Caco-2 (cell line): ENCODE measurements at regions of chr13 and their contacts with region 1.

Region 1: GRCh38 chr13:45332036-45332830 is 8.8 kb downstream of the TPT1 start:
- DNase-seq: no peak
- H3K4me3 ChIP-seq: no peak overlapping the region
- H3K4me3 Mint-ChIP-seq: no peak overlapping the region
- H3K27ac Mint-ChIP-seq: peak overlapping the region; percentile 54
- H3K4me1 ChIP-seq: peaks cover 43% of the 10 kb centered on the region
- H3K4me1 Mint-ChIP-seq: peaks cover 51% of the 10 kb centered on the region
- H3K27me3 ChIP-seq: no peaks in the 10 kb centered on the region
- H3K27me3 Mint-ChIP-seq: no peaks in the 10 kb centered on the region
- CTCF ChIP-seq: no peak

Region 2: DNA sequence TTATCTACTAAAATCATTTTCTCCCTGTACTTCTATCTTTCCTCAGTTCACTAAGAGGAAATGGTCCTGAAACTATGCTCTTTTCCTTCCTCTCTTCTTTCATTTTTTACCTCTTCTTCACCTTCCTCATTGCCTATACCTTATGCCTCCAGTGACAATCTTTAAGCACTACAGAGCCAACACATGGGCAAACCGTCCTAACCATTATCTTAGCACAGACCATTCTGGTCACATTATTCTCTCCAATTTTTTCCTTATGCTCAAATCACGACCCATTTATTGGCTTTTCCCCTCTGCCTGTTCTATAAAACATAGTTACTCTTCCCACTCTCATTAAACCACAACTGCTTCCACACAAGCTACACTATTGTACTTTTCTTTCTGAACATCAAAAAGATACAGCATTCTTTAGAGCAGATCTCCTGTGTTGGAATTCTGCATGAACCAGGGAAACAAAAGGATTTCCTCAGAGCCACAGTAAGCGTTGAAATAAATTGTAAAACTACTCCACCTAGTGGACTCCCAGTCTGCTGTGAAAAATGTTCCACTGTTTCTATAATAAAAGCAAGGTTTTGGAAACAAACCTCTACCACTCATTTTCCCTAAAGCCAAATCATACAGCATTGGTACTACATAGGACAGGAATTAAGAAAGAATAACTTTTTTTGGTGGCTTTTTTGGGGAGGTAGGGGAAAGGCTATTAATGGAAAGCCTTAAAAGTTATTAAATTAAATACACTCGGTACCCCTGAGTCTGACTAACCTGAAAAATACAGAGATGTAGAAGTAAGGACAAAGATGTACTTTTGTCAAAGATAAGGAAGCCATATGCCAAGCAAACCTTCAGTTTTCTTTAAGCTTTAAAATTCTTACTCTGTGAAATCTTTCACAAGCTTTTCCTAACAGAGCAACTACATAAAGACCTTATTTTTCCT is 362.4 kb before region 1 on chr13:
- CTCF ChIA-PET with region 1: no interaction called
- POLR2A ChIA-PET with region 1: no interaction called
- intact Hi-C with region 1: no loop called
- DNase-seq: peak in 1 of 2 experiments; percentile 62
- H3K4me3 ChIP-seq: no peak overlapping the region
- H3K4me3 Mint-ChIP-seq: no peak overlapping the region
- H3K27ac Mint-ChIP-seq: no peak overlapping the region
- H3K4me1 ChIP-seq: peaks cover 14% of the 10 kb centered on the region
- H3K4me1 Mint-ChIP-seq: peaks cover 14% of the 10 kb centered on the region
- H3K27me3 ChIP-seq: no peaks in the 10 kb centered on the region
- H3K27me3 Mint-ChIP-seq: no peaks in the 10 kb centered on the region
- CTCF ChIP-seq: peak; percentile 74 to 81

Region 3: DNA sequence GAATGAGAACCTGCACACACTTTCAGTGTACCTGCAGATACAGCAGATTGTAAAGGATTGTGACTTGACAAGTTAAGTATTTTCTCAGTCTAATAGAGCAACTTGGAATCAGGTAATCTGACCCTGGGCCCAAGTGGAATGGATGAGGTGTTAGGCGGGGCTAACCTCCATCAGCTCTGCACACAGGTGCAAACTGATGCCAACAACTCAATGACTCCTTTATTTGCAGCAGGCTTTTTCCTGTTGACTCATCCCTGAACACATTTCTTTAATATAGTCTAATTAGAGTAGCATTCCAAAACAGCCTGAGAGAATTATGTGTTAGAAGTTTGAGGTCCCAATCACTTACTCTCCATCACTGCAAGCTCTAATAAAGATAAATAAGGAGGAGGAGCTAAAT is 40.1 kb before region 1 on chr13:
- CTCF ChIA-PET with region 1: no interaction called
- POLR2A ChIA-PET with region 1: interaction called, 16 read pairs
- intact Hi-C with region 1: no loop called
- DNase-seq: no peak
- H3K4me3 ChIP-seq: no peak overlapping the region
- H3K4me3 Mint-ChIP-seq: no peak overlapping the region
- H3K27ac Mint-ChIP-seq: no peak overlapping the region
- H3K4me1 ChIP-seq: peaks cover 7% of the 10 kb centered on the region; the same call in 1 of the 2 replicates
- H3K4me1 Mint-ChIP-seq: peaks cover 10% of the 10 kb centered on the region
- H3K27me3 ChIP-seq: no peaks in the 10 kb centered on the region
- H3K27me3 Mint-ChIP-seq: no peaks in the 10 kb centered on the region
- CTCF ChIP-seq: no peak

Region 4: GRCh38 chr13:45362939-45363338 is 30.7 kb after region 1 on chr13:
- CTCF ChIA-PET with region 1: interaction called, 13 read pairs
- POLR2A ChIA-PET with region 1: no interaction called
- intact Hi-C with region 1: no loop called
- DNase-seq: peak in 1 of 2 experiments; percentile 30
- H3K4me3 ChIP-seq: no peak overlapping the region
- H3K4me3 Mint-ChIP-seq: no peak overlapping the region
- H3K27ac Mint-ChIP-seq: peak overlapping the region; percentile 53
- H3K4me1 ChIP-seq: peaks cover 4% of the 10 kb centered on the region; the same call in 1 of the 2 replicates
- H3K4me1 Mint-ChIP-seq: peaks cover 14% of the 10 kb centered on the region
- H3K27me3 ChIP-seq: no peaks in the 10 kb centered on the region
- H3K27me3 Mint-ChIP-seq: no peaks in the 10 kb centered on the region
- CTCF ChIP-seq: peak in 1 of 2 experiments; percentile 37

Region 5: DNA sequence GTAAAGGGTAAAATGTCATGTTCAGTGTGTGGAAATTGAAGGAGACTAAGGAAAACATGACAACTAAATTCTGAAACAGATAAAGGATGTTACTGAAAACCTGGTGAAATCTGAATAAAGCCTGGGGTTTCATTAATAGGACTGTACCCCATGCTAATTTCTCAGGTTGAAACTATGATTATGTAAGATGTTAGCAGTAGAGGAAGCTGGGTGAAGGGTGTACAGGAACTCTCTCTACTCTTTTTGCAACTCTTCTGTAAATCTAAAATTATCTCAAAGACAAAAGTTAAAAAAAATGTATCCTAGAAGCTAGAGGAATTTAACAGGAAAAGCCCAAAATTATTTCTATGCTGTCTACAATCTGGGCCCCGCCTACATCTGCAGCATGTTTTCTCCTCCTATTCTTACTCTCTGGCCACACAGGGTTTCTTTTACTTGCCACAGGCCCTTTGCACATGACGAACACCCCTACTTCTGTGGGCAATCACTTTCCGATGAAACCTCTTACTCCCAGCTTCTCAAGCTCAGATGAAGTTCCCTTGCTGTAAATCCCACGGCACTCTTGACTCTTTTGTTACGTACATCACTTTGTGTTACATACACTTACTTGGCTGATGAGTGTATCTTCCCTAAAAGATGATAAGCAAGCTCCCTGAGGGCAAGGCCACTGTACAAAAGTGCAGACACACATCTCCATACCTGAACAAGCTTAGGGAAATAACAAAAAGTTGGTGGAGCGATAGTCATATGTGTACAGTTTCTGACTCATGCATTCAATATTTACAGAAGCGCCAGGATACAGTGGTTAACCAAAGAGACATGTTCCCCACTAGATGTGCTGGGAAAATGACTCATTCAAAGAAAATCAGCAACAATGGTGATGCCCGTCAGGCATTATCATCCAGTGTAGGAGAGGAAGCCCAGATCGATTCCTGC is 1022.2 kb after region 1 on chr13:
- CTCF ChIA-PET with region 1: no interaction called
- POLR2A ChIA-PET with region 1: no interaction called
- intact Hi-C with region 1: no loop called
- DNase-seq: no peak
- H3K4me3 ChIP-seq: no peak overlapping the region
- H3K4me3 Mint-ChIP-seq: no peak overlapping the region
- H3K27ac Mint-ChIP-seq: no peak overlapping the region
- H3K4me1 ChIP-seq: no peaks in the 10 kb centered on the region
- H3K4me1 Mint-ChIP-seq: no peaks in the 10 kb centered on the region
- H3K27me3 ChIP-seq: no peaks in the 10 kb centered on the region
- H3K27me3 Mint-ChIP-seq: no peaks in the 10 kb centered on the region
- CTCF ChIP-seq: no peak